ENCODE measurements at regions of chr6 and their contacts with region 1.

Region 1: GRCh38 chr6:159557031-159557430 is 136.0 kb downstream of the SOD2 start:
- DNase-seq: no peak
- H3K4me3 ChIP-seq: no peak overlapping the region
- H3K27ac ChIP-seq: no peak overlapping the region
- H3K4me1 ChIP-seq: no peaks in the 10 kb centered on the region
- H3K27me3 ChIP-seq: no peaks in the 10 kb centered on the region
- CTCF ChIP-seq: no peak

Region 2: DNA sequence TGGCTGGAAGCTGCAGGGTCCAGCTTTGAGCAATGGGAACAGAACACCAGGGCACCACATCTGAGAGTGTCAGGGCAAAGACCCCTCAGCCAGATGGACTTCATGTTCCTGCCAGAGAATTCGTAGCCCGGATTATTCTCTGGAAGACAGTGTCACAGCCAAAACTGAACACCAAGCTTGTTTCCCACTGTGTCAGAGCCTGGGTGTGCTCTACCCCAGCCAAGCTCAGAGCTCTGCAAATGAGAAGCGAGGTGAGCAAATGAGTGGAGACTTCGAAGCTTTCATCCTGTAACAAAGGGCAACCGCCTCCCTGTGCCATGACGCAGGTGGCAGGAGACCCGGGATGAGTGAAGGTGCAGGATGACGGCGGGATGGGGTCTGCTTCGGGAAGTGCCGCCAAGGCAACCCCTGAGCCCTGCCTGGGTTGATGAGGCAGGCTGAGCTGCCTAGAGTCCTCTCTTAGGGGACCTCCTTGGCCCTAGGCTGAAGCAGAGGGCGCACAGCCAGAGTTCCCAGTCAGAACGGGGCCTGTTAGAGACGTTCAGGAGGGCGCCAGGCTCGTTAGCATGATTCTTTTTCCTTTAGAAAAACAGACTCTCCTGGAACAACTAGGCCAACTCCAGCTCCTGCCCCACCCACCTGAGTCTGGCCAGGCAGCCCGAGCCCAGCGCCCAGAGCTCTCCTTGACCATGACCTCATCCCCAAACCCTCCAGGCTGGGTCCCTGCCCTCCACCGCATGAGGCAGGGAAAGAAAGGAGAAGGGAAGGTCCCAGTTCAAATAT is 51.7 kb before region 1 on chr6:
- CTCF ChIA-PET with region 1: no interaction called
- dilution Hi-C with region 1: no loop called
- in situ Hi-C with region 1: no loop called
- intact Hi-C with region 1: no loop called
- DNase-seq: no peak
- H3K4me3 ChIP-seq: no peak overlapping the region
- H3K27ac ChIP-seq: no peak overlapping the region
- H3K4me1 ChIP-seq: no peaks in the 10 kb centered on the region
- H3K27me3 ChIP-seq: no peaks in the 10 kb centered on the region
- CTCF ChIP-seq: no peak

Region 3: GRCh38 chr6:159586684-159587083 is 29.7 kb after region 1 on chr6:
- CTCF ChIA-PET with region 1: no interaction called
- dilution Hi-C with region 1: no loop called
- in situ Hi-C with region 1: no loop called
- intact Hi-C with region 1: loop called (anchors 5 kb)
- DNase-seq: no peak
- H3K4me3 ChIP-seq: no peak overlapping the region
- H3K27ac ChIP-seq: no peak overlapping the region
- H3K4me1 ChIP-seq: no peaks in the 10 kb centered on the region
- H3K27me3 ChIP-seq: no peaks in the 10 kb centered on the region
- CTCF ChIP-seq: no peak